Right ventricle myocardium superior (tissue), 1 donor: ENCODE measurements at regions of chr3 and their contacts with region 1.

Region 1: GRCh38 chr3:136929984-136930670 is 27.7 kb upstream of the IL20RB start:
- DNase-seq: peak; percentile 61
- ATAC-seq: peak; percentile 80

Region 2: DNA sequence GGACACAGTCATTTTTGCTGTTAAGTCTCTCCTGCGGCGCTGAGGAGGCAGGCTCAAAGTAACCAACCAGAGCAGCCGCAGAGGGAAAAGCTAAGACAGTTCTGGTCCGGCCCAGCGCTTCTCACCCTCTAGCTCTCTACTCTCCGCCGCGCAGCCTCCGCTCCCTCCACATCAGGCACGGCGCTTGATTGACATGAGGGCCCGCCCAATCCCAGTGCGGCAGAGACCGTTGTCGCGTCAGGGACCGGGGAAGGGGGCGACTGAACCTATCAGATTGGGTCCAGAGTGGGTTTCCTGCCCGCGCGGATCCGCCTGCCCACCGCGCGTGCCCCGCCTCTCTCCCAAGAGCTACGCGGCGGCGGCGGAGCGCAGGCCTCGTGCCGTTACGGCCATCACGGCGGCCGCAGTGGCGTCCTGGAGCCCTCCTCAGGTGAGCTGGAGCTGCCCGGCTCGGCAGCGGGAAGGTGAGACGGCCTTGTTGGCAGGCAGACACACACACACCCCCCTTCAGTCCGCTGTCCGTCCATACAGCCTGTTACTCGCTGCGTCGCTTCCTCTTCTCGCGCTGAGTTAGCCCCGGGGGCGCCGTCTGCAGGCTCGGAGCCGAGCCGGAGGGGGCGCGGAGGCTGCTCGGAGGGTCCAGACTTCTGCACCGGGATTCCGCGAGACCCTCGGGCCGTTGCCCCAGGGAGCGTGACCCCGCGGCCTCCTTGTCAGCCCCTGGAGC is 68.1 kb before region 1 on chr3 and contains the start of gene NCK1:
- intact Hi-C with region 1: loop called (anchors 10 kb)
- DNase-seq: peak; percentile 99
- ATAC-seq: peak; percentile 98
- total RNA-seq, gene NCK1: 21.7 TPM

Region 3: DNA sequence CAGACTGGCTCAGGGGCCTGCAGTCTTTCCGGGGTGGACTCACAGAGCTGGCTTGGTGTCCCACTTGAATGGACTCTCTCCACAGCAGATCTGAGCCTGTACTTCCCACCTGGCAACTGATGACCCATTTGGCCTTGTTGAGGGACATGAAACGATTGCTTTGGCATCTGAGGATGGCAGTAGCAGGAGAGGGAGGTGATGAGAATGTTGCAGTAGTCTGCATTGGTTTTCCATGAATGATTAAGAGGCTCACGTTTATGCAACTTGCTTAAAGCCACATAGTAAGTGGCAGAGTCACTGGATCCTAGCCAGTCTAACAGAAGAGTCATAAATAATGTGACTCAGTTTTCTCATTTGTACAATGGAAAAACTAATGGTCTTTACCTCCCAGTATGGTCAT is 49.6 kb after region 1 on chr3:
- intact Hi-C with region 1: no loop called
- DNase-seq: no peak
- ATAC-seq: no peak

Region 4: GRCh38 chr3:137325170-137325569 is 395.0 kb after region 1 on chr3:
- intact Hi-C with region 1: no loop called
- DNase-seq: no peak
- ATAC-seq: no peak